GM12878 (cell line): ENCODE measurements at regions of chr16 and their contacts with region 1.

Region 1: DNA sequence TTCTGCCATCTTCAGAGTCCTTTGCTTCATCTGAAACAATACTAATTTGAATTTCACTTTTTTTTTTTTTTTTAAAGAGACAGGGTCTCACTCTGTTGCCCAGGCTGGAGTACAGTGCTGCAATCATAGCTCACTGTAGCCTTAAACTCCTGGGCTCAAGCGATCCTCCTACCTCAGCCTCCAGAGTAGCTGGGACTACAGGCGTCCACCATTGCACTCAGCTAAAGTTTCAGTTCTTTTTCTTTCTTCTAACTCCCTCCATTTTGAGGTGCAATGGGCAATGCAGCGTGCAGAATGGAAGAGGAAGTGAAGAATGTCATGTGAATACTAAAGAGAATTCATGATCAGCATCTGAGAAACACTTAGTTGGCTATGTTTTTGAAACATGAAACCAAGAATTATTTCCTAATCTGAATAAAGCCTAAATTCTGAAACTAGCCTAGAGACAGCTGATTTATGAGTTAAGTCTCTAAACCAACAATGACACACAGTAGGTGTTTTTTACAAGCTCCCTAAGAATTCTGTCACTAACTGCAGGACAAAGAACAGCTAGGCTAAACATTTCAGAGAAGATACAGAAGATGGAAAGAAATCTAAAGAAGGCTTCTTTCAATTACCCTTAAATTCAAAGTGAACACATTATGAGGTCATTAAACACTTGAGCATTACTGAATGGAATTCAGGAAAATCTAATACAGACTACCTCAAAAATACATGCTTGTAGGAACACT is 20.9 kb downstream of the SNN start:
- DNase-seq: peak; percentile 89
- ATAC-seq: peak; percentile 95
- H3K4me3 ChIP-seq: no peak overlapping the region
- H3K27ac ChIP-seq: peak overlapping the region; percentile 68
- H3K4me1 ChIP-seq: peaks cover 52% of the 10 kb centered on the region
- H3K27me3 ChIP-seq: no peaks in the 10 kb centered on the region
- CTCF ChIP-seq: no peak
- EP300 ChIP-seq: peak; percentile 84 to 95; a peak in 3 of 4 replicates
- POLR2A ChIP-seq: no peak
- RAD21 ChIP-seq: 0 out of 2 replicates have a peak, but pooled peaks have one; percentile 2

Region 2: GRCh38 chr16:11639925-11640899 is 49.0 kb before region 1 on chr16:
- CTCF ChIA-PET with region 1: interaction called, 12 read pairs
- POLR2A ChIA-PET with region 1: no interaction called
- RAD21 ChIA-PET with region 1: no interaction called
- SMC1A ChIA-PET with region 1: interaction called, 8 read pairs
- in situ Hi-C with region 1: no loop called
- intact Hi-C with region 1: no loop called
- DNase-seq: no peak
- ATAC-seq: peak; percentile 15; the same call in 1 of the 3 replicates
- H3K4me3 ChIP-seq: no peak overlapping the region
- H3K27ac ChIP-seq: no peak overlapping the region
- H3K4me1 ChIP-seq: no peaks in the 10 kb centered on the region
- H3K27me3 ChIP-seq: no peaks in the 10 kb centered on the region; a peak in 1 of 4 replicates
- CTCF ChIP-seq: no peak
- EP300 ChIP-seq: no peak
- POLR2A ChIP-seq: no peak
- RAD21 ChIP-seq: no peak

Region 3: DNA sequence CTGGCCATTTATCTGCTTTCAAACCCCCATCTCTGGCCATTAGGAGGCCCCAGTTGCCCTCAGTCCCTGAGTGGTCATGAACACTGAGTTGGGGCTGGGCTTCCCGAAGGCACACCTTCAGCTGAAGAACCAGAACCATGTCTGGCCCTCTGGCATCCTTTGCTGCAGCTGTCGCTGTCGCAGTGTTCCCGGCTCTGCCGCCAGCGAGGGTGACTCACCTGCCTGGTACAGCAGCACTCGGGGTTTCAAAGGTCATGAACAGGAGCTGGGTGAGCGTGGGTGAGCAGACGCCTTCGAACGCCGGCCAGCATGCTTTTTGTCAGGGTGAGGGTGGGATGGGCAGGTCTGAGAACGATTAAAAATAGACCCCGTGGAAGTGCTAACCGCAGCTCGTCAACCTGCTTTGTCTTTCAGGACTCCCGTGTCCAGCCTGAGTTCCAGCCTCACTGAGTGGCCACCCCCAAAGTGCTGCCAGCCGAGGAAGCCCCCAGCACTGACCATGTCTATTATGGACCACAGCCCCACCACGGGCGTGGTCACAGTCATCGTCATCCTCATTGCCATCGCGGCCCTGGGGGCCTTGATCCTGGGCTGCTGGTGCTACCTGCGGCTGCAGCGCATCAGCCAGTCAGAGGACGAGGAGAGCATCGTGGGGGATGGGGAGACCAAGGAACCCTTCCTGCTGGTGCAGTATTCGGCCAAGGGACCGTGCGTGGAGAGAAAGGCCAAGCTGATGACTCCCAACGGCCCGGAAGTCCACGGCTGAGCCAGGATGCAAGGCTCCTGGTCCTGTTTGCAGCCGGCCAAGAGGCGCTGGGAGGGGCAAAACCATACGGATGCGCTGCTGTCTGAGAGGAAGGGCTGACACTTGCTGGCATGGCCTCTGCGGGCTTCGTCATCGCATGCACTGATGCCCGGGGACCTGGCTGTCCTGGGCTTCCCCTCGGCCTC is 13.4 kb before region 1 on chr16:
- CTCF ChIA-PET with region 1: interaction called, 34 read pairs
- POLR2A ChIA-PET with region 1: interaction called, 75 read pairs
- RAD21 ChIA-PET with region 1: interaction called, 34 read pairs
- SMC1A ChIA-PET with region 1: interaction called, 46 read pairs
- in situ Hi-C with region 1: no loop called
- intact Hi-C with region 1: no loop called
- DNase-seq: no peak
- ATAC-seq: no peak
- H3K4me3 ChIP-seq: no peak overlapping the region
- H3K27ac ChIP-seq: no peak overlapping the region
- H3K4me1 ChIP-seq: peaks cover 71% of the 10 kb centered on the region
- H3K27me3 ChIP-seq: no peaks in the 10 kb centered on the region
- CTCF ChIP-seq: no peak
- EP300 ChIP-seq: no peak
- POLR2A ChIP-seq: 0 out of 2 replicates have a peak, but pooled peaks have one; percentile 2
- RAD21 ChIP-seq: no peak

Region 4: GRCh38 chr16:11708421-11708820 is 19.2 kb after region 1 on chr16:
- CTCF ChIA-PET with region 1: interaction called, 9 read pairs
- POLR2A ChIA-PET with region 1: interaction called, 3 read pairs
- RAD21 ChIA-PET with region 1: interaction called, 3 read pairs
- SMC1A ChIA-PET with region 1: interaction called, 13 read pairs
- in situ Hi-C with region 1: no loop called
- intact Hi-C with region 1: no loop called
- DNase-seq: no peak
- ATAC-seq: no peak
- H3K4me3 ChIP-seq: no peak overlapping the region
- H3K27ac ChIP-seq: no peak overlapping the region
- H3K4me1 ChIP-seq: no peaks in the 10 kb centered on the region; the same call in 1 of the 2 replicates
- H3K27me3 ChIP-seq: no peaks in the 10 kb centered on the region
- CTCF ChIP-seq: no peak
- EP300 ChIP-seq: no peak
- POLR2A ChIP-seq: no peak
- RAD21 ChIP-seq: no peak

Region 5: GRCh38 chr16:11734025-11734652 is 44.9 kb after region 1 on chr16:
- CTCF ChIA-PET with region 1: interaction called, 4 read pairs
- POLR2A ChIA-PET with region 1: interaction called, 9 read pairs
- RAD21 ChIA-PET with region 1: interaction called, 15 read pairs
- SMC1A ChIA-PET with region 1: interaction called, 17 read pairs
- in situ Hi-C with region 1: no loop called
- intact Hi-C with region 1: no loop called
- DNase-seq: no peak
- ATAC-seq: peak; percentile 47
- H3K4me3 ChIP-seq: peak overlapping the region; percentile 22
- H3K27ac ChIP-seq: peak overlapping the region; percentile 74
- H3K4me1 ChIP-seq: peaks cover 56% of the 10 kb centered on the region
- H3K27me3 ChIP-seq: no peaks in the 10 kb centered on the region
- CTCF ChIP-seq: no peak
- EP300 ChIP-seq: peak; percentile 38 to 73; a peak in 2 of 4 replicates
- POLR2A ChIP-seq: no peak
- RAD21 ChIP-seq: no peak

Region 6: GRCh38 chr16:11783319-11784037 is 94.3 kb after region 1 on chr16:
- CTCF ChIA-PET with region 1: interaction called, 6 read pairs
- POLR2A ChIA-PET with region 1: interaction called, 9 read pairs
- RAD21 ChIA-PET with region 1: interaction called, 4 read pairs
- SMC1A ChIA-PET with region 1: interaction called, 11 read pairs
- in situ Hi-C with region 1: no loop called
- intact Hi-C with region 1: no loop called
- DNase-seq: peak; percentile 89
- ATAC-seq: peak; percentile 71
- H3K4me3 ChIP-seq: peak overlapping the region; percentile 67
- H3K27ac ChIP-seq: peak overlapping the region; percentile 99
- H3K4me1 ChIP-seq: peaks cover 34% of the 10 kb centered on the region
- H3K27me3 ChIP-seq: no peaks in the 10 kb centered on the region
- CTCF ChIP-seq: no peak
- EP300 ChIP-seq: peak; percentile 88 to 90
- POLR2A ChIP-seq: peak; percentile 61
- RAD21 ChIP-seq: no peak